ENCODE measurements at regions of chr4 and their contacts with region 1.

Region 1: GRCh38 chr4:40149960-40150385 is 46.9 kb upstream of the RHOH start:
- DNase-seq: peak; percentile 86
- H3K4me3 Mint-ChIP-seq: no peak overlapping the region
- H3K27ac Mint-ChIP-seq: no peak overlapping the region
- H3K4me1 Mint-ChIP-seq: no peaks in the 10 kb centered on the region
- H3K27me3 Mint-ChIP-seq: no peaks in the 10 kb centered on the region
- CTCF ChIP-seq: peak; percentile 90

Region 2: DNA sequence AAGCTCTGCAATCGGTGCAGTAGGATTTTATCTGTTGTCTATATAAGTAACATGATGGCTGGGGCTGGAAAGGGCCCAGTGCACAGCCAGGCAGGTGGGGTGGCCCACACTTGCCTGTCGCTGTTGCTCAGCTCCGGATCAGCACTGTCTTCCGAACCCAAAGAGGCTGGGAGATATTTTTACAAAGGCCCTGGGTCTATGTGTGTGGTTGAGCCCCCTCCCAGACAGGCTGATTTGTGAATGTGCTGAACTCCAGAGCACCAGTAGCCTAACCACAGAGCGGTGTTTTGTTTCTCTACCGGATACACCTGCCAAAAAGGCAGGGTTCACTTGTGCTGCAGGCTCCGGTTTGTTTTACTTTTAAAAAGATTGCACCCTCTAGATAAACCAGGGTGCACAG is 151.6 kb after region 1 on chr4:
- CTCF ChIA-PET with region 1: interaction called, 9 read pairs
- POLR2A ChIA-PET with region 1: no interaction called
- intact Hi-C with region 1: loop called (anchors 2 kb)
- DNase-seq: no peak
- H3K4me3 Mint-ChIP-seq: no peak overlapping the region
- H3K27ac Mint-ChIP-seq: no peak overlapping the region
- H3K4me1 Mint-ChIP-seq: peaks cover 7% of the 10 kb centered on the region
- H3K27me3 Mint-ChIP-seq: no peaks in the 10 kb centered on the region
- CTCF ChIP-seq: no peak

Region 3: DNA sequence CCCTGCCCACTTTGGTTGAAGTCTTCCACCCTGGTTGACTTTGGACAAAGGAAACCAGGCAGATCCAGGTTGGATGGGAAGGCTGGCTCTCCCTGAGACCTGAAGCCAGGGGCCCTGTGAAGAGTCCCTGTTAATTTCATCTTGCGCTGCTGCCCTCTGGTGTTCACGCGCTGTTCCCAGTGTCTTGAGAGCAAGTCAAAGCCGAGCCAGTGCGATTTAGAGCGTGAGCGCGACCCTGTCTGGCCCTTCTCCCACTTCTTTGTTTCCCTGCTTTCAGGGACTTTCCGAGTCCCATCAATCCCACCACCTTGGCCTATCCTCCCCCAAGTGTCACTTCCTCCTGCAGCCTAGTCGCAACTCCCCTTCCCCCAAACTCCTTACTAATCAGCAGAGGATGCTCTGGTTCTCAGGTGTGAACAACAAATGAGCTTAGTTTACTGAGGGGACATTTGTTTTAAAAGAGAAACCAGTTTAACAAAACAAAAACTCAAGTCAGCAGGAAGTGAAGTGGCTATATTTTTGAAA is 159.3 kb after region 1 on chr4:
- CTCF ChIA-PET with region 1: interaction called, 47 read pairs
- POLR2A ChIA-PET with region 1: interaction called, 4 read pairs
- intact Hi-C with region 1: loop called (anchors 1 kb)
- DNase-seq: peak; percentile 90
- H3K4me3 Mint-ChIP-seq: no peak overlapping the region
- H3K27ac Mint-ChIP-seq: no peak overlapping the region
- H3K4me1 Mint-ChIP-seq: peaks cover 25% of the 10 kb centered on the region
- H3K27me3 Mint-ChIP-seq: no peaks in the 10 kb centered on the region
- CTCF ChIP-seq: peak; percentile 81

Region 4: DNA sequence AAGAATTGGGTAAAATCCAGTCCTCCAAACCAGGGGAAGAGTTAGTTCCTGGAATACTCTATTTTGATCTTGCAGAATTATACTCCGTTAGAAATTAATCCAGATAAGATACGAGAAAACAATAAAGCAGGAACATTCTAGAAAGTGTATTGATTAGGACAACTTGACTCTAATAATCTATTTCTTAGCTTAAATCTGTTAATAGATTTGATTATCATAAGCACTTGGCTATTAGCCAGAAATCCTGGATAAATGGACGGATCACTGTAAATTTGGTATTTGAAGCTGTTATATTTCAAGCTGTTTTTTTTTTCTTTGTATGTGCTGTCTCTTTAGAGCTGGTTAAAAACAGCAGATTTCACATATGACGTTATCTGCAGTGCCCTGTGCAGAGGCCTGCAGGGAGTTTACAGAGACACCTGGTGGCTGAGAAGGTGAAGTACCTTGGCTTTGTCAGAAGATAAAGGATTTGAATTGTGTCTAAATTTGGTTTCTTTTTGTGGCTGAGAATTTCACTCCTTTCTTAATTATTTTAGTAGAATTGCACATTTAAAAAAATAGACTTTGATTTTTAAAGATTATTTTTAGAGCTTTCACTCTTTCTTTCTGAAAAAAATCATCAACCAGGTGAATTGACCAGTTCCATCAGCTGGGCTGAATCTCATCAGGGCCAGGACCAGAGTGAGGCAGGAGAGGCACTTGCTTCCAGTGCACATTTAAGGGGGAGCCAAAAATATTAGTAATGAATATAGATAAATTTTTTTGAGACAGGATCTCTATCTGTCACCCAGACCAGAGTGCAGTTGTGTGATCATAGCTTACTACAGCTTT is 175.4 kb after region 1 on chr4:
- CTCF ChIA-PET with region 1: interaction called, 16 read pairs
- POLR2A ChIA-PET with region 1: no interaction called
- intact Hi-C with region 1: loop called (anchors 1 kb)
- DNase-seq: peak; percentile 72
- H3K4me3 Mint-ChIP-seq: no peak overlapping the region
- H3K27ac Mint-ChIP-seq: no peak overlapping the region
- H3K4me1 Mint-ChIP-seq: peaks cover 26% of the 10 kb centered on the region
- H3K27me3 Mint-ChIP-seq: no peaks in the 10 kb centered on the region
- CTCF ChIP-seq: peak; percentile 80

Region 5: DNA sequence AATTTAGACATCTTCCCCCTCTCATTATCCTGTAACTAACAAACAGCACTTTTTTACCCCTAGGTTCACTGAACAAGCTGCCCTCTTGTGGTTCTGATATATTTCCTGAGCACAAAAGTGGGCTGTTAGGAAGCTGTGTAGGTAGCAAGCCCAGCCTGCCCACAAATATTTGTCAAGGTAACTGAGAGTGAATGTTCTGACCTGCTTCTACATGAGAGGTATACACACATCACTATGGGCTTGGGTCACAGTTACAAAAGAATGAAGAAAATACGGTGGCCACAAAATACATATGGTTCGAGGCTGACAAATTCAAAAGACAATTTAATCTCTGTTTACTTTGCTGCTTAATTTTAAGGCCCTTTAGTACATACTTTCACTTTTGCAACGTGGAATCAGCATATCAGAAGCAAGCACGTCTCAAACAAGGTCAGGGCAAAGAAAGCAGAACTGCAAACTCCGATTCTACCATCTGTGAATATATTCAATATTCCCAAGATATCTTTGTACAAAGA is 401.0 kb after region 1 on chr4:
- CTCF ChIA-PET with region 1: no interaction called
- POLR2A ChIA-PET with region 1: no interaction called
- intact Hi-C with region 1: loop called (anchors 5 kb)
- DNase-seq: peak; percentile 64
- H3K4me3 Mint-ChIP-seq: peak overlapping the region; percentile 58
- H3K27ac Mint-ChIP-seq: peak overlapping the region; percentile 32
- H3K4me1 Mint-ChIP-seq: peaks cover 15% of the 10 kb centered on the region
- H3K27me3 Mint-ChIP-seq: no peaks in the 10 kb centered on the region
- CTCF ChIP-seq: peak; percentile 17

Region 6: GRCh38 chr4:40719008-40719623 is 569.1 kb after region 1 on chr4:
- CTCF ChIA-PET with region 1: interaction called, 5 read pairs
- POLR2A ChIA-PET with region 1: no interaction called
- intact Hi-C with region 1: loop called (anchors 1 kb)
- DNase-seq: peak; percentile 74
- H3K4me3 Mint-ChIP-seq: no peak overlapping the region
- H3K27ac Mint-ChIP-seq: no peak overlapping the region
- H3K4me1 Mint-ChIP-seq: no peaks in the 10 kb centered on the region
- H3K27me3 Mint-ChIP-seq: no peaks in the 10 kb centered on the region
- CTCF ChIP-seq: peak; percentile 60

Measured in MCF 10A (cell line).